Activated CD4-positive, alpha-beta T cell treated with anti-CD3 and anti-CD28 coated beads for 36 hours (primary cell): ENCODE measurements at regions of chr2 and their contacts with region 1.

Region 1: DNA sequence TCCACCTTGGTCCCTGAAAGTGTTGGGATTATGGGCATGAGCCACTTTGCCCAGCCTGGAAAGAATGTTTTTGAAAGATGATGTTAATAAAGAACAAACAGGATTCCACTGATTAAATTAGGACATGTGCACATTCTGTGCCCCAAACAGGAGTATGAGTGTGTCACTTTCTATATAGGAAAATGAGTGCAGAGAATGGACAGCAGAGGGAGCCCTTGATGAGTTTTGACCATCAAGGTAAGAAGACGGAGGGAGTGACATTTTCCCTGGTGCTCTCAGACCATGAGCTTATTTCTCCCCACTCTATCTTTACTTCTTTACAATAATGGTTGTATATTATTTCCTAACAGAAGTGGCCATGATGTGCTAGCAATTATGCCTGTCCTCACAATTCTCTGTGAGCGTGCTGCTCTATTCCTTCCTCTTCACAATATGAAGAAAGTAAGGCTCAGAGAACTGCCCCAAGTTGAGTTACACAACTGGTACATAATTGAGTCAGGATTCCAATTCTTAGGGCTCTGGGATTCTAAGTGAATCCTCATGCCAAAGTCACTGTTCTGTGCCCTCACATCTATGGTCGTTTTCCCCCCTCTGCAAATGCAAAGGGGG is 20.6 kb downstream of the RPL37A start:
- DNase-seq: peak; percentile 69
- ATAC-seq: peak; percentile 79
- H3K4me3 Mint-ChIP-seq: no peak overlapping the region
- H3K27ac Mint-ChIP-seq: no peak overlapping the region
- H3K4me1 Mint-ChIP-seq: no peaks in the 10 kb centered on the region
- H3K27me3 Mint-ChIP-seq: no peaks in the 10 kb centered on the region

Region 2: DNA sequence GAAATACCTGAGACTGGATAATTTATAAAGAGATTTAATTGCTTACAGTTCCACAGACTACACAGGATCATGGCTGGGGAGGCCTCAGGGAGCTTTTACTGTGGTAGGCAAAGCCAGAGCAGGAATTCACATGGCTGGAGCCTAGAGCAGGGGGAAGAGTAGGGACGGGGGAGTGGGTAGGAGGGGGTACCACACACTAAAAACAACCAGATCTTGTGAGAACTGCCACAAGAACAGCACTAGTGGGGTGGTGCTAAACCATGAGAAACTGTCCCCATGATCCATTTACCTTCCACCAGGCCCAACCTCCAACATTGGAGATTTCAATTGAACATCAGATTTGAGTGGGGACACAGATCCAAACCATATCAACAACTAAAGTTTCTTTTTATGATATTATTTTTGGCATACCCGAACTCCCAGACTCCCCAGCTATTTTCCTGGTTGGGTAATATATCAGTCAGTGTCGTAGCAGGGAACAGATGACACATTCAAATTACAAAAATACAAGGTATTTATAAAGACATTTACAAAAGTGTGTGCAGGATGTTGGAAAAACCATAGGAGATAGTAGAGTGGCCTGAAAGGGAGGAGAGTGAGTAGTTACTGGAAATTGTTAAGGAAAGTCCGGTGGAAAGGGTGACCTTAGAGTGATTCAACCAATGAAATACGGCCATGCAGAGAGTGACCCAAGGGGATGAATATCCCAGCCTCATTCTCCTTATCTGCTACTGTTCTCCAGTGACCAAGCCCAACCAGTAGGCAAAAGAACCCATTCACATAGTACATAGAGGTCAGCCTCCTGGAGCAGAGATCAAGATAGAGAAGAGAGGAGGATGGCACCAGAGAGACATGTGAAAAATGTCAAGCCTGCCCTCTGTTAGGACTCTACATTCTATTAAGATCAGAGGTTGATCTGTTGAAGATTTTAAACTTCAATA is 11.8 kb before region 1 on chr2:
- CTCF ChIA-PET with region 1: interaction called, 20 read pairs
- POLR2A ChIA-PET with region 1: no interaction called
- intact Hi-C with region 1: no loop called
- DNase-seq: no peak
- ATAC-seq: peak; percentile 9
- H3K4me3 Mint-ChIP-seq: no peak overlapping the region
- H3K27ac Mint-ChIP-seq: no peak overlapping the region
- H3K4me1 Mint-ChIP-seq: peaks cover 23% of the 10 kb centered on the region
- H3K27me3 Mint-ChIP-seq: no peaks in the 10 kb centered on the region